Activated CD4-positive, alpha-beta T cell treated with anti-CD3 and anti-CD28 coated beads for 36 hours (primary cell): ENCODE measurements at regions of chr17 and their contacts with region 1.

Region 1: DNA sequence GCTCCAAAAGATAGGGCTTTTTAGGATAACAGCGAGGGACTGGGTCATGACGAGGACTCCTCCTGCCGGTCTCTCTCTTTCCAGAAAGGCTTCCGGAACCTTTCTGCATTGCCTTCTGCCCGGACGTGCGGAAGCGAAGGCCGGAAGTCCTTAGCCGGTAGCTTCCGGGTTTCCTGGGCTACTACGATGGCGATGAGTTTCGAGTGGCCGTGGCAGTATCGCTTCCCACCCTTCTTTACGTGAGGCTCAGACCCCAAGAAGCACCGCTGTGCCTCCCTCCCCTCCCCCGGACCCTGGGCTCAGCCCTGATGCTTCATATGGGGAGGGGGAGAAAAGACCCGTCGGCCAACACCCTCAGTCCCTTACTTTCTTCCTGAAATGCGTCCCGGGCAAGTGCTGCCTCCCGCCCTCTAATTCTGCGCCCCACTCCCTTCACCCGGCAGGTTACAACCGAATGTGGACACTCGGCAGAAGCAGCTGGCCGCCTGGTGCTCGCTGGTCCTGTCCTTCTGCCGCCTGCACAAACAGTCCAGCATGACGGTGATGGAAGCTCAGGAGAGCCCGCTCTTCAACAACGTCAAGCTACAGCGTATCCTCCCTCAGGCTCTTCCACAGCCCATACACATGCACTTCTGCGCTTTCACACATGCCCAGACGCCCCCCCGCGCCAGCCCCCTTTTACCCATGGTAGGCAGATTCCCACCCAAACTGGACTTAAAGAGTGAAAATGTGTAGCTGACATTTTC is at the start of gene VPS25:
- DNase-seq: peak; percentile 81
- ATAC-seq: peak; percentile 97
- H3K4me3 Mint-ChIP-seq: peak within 1 kb of the TSS; percentile 96
- H3K27ac Mint-ChIP-seq: peak within 1 kb of the TSS; percentile 95
- H3K4me1 Mint-ChIP-seq: peaks cover 22% of the 10 kb centered on the region
- H3K27me3 Mint-ChIP-seq: no peaks in the 10 kb centered on the region
- total RNA-seq, gene VPS25: 62.5 to 64.0 TPM

Region 2: DNA sequence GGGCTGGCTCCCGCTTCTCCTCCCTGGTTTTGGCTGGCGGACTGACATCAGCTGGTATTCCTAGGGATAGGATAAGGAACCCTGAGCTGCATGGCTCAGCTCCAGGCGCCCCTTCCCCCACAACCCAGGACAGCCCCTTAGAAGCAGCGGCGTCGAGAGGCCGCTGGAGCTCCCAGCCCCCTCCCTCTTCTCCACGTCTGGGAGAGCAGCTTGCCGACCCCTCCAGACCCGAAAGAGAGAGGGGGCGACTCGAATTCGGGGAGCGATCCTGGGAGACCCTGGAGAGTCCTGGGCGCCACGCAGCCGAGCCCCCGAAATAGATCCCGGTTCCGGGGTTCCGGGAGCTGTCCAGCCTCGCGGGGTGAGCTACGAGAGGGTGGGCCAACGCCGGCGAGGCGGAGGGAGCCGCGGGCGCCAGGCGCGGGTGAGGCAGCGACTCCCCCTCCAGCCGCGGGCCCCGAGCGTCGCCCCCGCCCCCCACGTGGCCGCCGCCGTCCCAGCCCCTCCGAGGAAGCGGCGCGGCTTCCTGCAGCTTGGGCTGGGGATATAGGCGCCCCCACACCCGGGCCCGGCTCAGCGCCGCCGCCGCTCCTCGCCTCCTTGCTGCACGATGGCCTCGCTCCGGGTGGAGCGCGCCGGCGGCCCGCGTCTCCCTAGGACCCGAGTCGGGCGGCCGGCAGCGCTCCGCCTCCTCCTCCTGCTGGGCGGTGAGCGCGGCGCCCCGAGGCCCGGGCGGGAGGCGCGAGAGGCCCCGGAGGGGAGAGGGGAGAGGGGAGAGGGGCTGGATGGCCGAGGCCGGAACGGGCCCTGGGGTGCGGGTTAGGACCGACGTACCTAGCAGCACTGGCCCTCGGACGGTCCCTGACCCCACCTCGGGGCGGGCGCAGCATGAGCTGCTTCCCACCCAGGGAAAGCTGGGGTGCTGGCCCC is 12.5 kb before region 1 on chr17 and contains the start of gene RAMP2:
- CTCF ChIA-PET with region 1: interaction called, 23 read pairs
- POLR2A ChIA-PET with region 1: interaction called, 5 read pairs
- intact Hi-C with region 1: loop called in 1 of 2 experiments (anchors 1 kb)
- DNase-seq: peak; percentile 44
- ATAC-seq: peak; percentile 27
- H3K4me3 Mint-ChIP-seq: no peak within 1 kb of the TSS
- H3K27ac Mint-ChIP-seq: no peak within 1 kb of the TSS
- H3K4me1 Mint-ChIP-seq: peaks cover 11% of the 10 kb centered on the region
- H3K27me3 Mint-ChIP-seq: peaks cover 48% of the 10 kb centered on the region
- total RNA-seq, gene RAMP2: not detected